ENCODE measurements at regions of chr4 and their contacts with region 1.

Region 1: GRCh38 chr4:185142912-185143595 is at the start of gene SLC25A4:
- DNase-seq: peak; percentile 82 to 92
- ATAC-seq: peak; percentile 71 to 77
- H3K4me3 ChIP-seq: peak within 1 kb of the TSS; percentile 72 to 81 (median 74)
- H3K27ac ChIP-seq: peak within 1 kb of the TSS; percentile 94 to 99 (median 97)
- H3K4me1 ChIP-seq: peaks cover 74 to 75% of the 10 kb centered on the region in 2 donors
- H3K27me3 ChIP-seq: no peaks in the 10 kb centered on the region
- CTCF ChIP-seq: peak in 4 of 5 experiments; percentile 55 to 77 (median 66)
- POLR2A ChIP-seq: peak; percentile 99 to 100
- total RNA-seq, gene SLC25A4: 360 to 914 (median 389) TPM

Region 2: GRCh38 chr4:184343502-184344177 is 799.4 kb before region 1 on chr4:
- in situ Hi-C with region 1: no loop called
- intact Hi-C with region 1: loop called (anchors 10 kb)
- DNase-seq: peak; percentile 77 to 84
- ATAC-seq: peak; percentile 64 to 69
- H3K4me3 ChIP-seq: peak overlapping the region; percentile 56 to 82 (median 67)
- H3K27ac ChIP-seq: peak overlapping the region; percentile 91 to 97 (median 92)
- H3K4me1 ChIP-seq: peaks cover 51 to 54% of the 10 kb centered on the region in 2 donors
- H3K27me3 ChIP-seq: no peaks in the 10 kb centered on the region
- CTCF ChIP-seq: no peak
- POLR2A ChIP-seq: peak; percentile 50 to 69

Region 3: GRCh38 chr4:184544788-184545409 is 598.2 kb before region 1 on chr4:
- in situ Hi-C with region 1: no loop called
- intact Hi-C with region 1: no loop called
- DNase-seq: no peak
- ATAC-seq: no peak
- H3K4me3 ChIP-seq: no peak overlapping the region
- H3K27ac ChIP-seq: no peak overlapping the region
- H3K4me1 ChIP-seq: no peaks in the 10 kb centered on the region
- H3K27me3 ChIP-seq: peaks cover 0 to 2% (median 0%) of the 10 kb centered on the region in 3 donors
- CTCF ChIP-seq: no peak
- POLR2A ChIP-seq: no peak

Region 4: DNA sequence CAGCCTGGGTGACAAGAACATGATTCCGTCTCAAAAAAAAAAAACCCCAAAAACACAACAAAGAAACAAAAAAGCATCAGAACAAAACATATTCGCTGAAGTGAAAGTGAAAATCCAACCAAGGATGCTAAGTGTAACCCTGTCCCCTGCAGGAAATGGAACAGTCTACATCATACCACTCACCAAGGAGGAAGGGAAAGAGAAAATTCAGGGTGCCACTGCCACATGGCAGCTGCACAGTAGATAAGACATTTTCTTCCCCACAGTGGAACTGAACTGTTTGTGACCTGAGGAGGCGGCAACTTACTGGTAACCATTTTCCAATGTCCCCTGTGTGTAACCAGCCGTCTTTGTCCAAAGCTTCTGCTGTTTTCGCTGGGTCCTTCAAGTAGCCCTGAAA is 381.0 kb before region 1 on chr4:
- in situ Hi-C with region 1: loop called in 1 of 4 experiments (anchors 25 kb)
- intact Hi-C with region 1: no loop called
- DNase-seq: no peak
- ATAC-seq: no peak
- H3K4me3 ChIP-seq: no peak overlapping the region
- H3K27ac ChIP-seq: peak overlapping the region; percentile 66 to 83 (median 71)
- H3K4me1 ChIP-seq: peaks cover 53 to 75% of the 10 kb centered on the region in 2 donors
- H3K27me3 ChIP-seq: no peaks in the 10 kb centered on the region
- CTCF ChIP-seq: no peak
- POLR2A ChIP-seq: no peak

Region 5: GRCh38 chr4:184983672-184984356 is 159.2 kb before region 1 on chr4:
- in situ Hi-C with region 1: no loop called
- intact Hi-C with region 1: no loop called
- DNase-seq: peak; percentile 6 to 44
- ATAC-seq: peak in 1 of 2 donors; percentile 62
- H3K4me3 ChIP-seq: no peak overlapping the region
- H3K27ac ChIP-seq: no peak overlapping the region
- H3K4me1 ChIP-seq: no peaks in the 10 kb centered on the region
- H3K27me3 ChIP-seq: no peaks in the 10 kb centered on the region
- CTCF ChIP-seq: peak in 4 of 5 experiments; percentile 21 to 43 (median 33)
- POLR2A ChIP-seq: no peak

Region 6: DNA sequence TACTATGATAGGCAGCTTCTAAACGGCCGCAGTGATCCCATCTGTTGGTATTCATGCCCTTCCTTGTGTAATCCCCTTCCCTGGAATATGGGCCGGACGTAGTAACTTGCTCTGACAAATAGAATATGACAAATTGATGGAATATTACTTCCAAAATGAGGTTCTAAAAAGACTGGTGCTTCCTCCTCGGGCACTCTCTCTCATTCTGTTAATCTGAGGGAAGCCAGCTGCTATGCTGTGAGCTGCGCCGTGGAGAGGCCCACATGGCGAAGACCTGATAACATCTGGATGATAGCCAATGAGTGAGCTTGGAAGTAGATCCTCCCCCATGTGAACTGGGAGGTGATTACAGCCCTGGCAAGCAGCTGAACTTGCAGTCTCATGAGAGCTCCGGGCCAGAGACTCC is 27.2 kb before region 1 on chr4:
- in situ Hi-C with region 1: no loop called
- intact Hi-C with region 1: loop called (anchors 2 kb)
- DNase-seq: peak; percentile 45 to 52
- ATAC-seq: peak; percentile 23 to 56
- H3K4me3 ChIP-seq: no peak overlapping the region
- H3K27ac ChIP-seq: peak overlapping the region; percentile 34 to 73 (median 43)
- H3K4me1 ChIP-seq: peaks cover 30 to 34% of the 10 kb centered on the region in 2 donors
- H3K27me3 ChIP-seq: no peaks in the 10 kb centered on the region
- CTCF ChIP-seq: no peak
- POLR2A ChIP-seq: no peak

Region 7: DNA sequence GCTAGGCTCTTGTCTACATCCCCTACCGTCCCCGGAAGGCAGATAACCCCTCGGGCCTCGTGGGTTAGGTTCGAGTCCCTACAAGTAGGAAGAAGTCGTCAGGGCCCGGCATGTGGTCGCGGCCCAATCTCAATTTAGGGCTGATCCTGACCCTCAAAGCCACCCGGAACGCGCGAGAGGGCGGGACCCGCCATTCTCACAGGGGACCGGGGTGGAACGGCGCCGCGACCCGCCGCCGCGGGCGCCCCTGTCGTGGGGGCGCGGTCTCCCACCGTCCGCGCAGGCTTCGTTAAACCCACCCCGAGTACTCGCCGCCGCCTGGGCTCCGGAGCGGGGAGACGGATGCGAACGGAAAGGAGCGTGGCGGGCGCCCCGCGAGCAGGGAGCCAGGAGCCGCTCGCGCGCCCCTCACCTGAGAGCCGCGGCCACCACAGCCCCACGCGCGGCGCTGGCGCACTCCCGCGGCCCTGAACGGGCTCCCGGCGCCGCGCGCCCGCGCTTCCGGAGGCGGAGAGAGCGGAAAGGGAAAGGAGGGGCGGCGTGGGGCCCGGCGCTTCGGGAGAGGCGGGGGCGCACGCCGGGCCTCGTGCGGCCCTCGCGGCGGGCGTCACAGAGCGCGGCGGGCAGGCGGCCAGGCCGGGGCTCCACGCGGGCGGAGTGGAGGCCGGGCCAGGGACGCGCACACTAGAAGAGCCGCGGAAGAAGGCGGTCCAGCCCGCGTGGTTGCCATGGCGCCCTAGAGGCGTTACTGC is 60.6 kb after region 1 on chr4 and contains the start of gene CFAP97:
- in situ Hi-C with region 1: no loop called
- intact Hi-C with region 1: loop called (anchors 5 kb)
- DNase-seq: peak; percentile 70 to 79
- ATAC-seq: peak; percentile 87 to 89
- H3K4me3 ChIP-seq: peak within 1 kb of the TSS; percentile 63 to 87 (median 74)
- H3K27ac ChIP-seq: peak within 1 kb of the TSS; percentile 85 to 99 (median 97)
- H3K4me1 ChIP-seq: peaks cover 10 to 25% of the 10 kb centered on the region in 2 donors
- H3K27me3 ChIP-seq: no peaks in the 10 kb centered on the region
- CTCF ChIP-seq: peak in 2 of 5 experiments; percentile 10 to 13
- POLR2A ChIP-seq: peak; percentile 84 to 87
- total RNA-seq, gene CFAP97: 6.5 to 14.1 (median 10.8) TPM

Region 8: GRCh38 chr4:185534866-185535611 is 392.0 kb after region 1 on chr4 and contains the start of gene PDLIM3:
- in situ Hi-C with region 1: no loop called
- intact Hi-C with region 1: no loop called
- DNase-seq: no peak
- ATAC-seq: peak; percentile 51 to 57
- H3K4me3 ChIP-seq: peak within 1 kb of the TSS; percentile 74 to 81 (median 80)
- H3K27ac ChIP-seq: peak within 1 kb of the TSS; percentile 89 to 98 (median 96)
- H3K4me1 ChIP-seq: peaks cover 26 to 34% of the 10 kb centered on the region in 2 donors
- H3K27me3 ChIP-seq: no peaks in the 10 kb centered on the region
- CTCF ChIP-seq: peak in 1 of 5 experiments; percentile 12
- POLR2A ChIP-seq: peak; percentile 99 to 100
- total RNA-seq, gene PDLIM3: 1,062 to 7,224 (median 2,598) TPM